ENCODE measurements at regions of chr5 and their contacts with region 1.

Region 1: GRCh38 chr5:34474573-34475021 is 181.5 kb upstream of the RAI14 start:
- DNase-seq: peak in 4 of 7 donors; percentile 14 to 38 (median 26)
- H3K4me3 ChIP-seq: no peak overlapping the region
- H3K27ac ChIP-seq: no peak overlapping the region
- H3K4me1 ChIP-seq: no peaks in the 10 kb centered on the region
- H3K27me3 ChIP-seq: no peaks in the 10 kb centered on the region
- CTCF ChIP-seq: peak; percentile 83 to 95 (median 87)
- POLR2A ChIP-seq: no peak

Region 2: DNA sequence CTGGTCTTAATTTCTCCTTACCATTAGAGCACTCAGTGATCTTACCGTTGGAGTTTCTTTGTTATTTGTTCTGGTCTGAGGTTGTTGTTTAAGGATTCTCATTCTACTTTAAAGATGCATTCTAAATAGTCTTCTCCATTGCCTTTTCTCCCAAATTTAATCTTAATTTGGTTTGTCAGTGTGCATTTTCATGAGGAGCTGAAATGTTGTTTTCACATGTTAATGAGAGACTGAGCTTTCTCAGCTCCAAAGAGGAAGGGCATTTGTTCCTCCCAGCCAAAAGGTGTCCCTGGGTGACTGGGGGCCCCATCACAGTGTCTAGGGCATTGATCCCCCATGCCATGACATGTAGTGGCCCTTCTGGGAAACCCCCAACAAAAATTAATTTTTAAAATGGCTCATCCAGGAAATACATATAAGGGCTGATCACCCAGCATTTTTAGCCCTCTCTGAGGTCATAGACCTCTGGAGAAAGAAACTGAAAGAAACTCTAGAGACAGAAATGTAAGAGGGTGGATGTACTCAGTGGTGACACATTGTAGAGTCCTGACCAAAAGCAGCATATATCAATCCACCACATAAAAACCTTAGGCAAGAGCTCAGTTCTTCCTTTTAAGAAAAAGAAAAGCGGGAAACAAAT is 58.9 kb before region 1 on chr5:
- intact Hi-C with region 1: no loop called
- DNase-seq: no peak
- H3K4me3 ChIP-seq: no peak overlapping the region
- H3K27ac ChIP-seq: no peak overlapping the region
- H3K4me1 ChIP-seq: no peaks in the 10 kb centered on the region
- H3K27me3 ChIP-seq: no peaks in the 10 kb centered on the region
- CTCF ChIP-seq: no peak
- POLR2A ChIP-seq: no peak

Region 3: DNA sequence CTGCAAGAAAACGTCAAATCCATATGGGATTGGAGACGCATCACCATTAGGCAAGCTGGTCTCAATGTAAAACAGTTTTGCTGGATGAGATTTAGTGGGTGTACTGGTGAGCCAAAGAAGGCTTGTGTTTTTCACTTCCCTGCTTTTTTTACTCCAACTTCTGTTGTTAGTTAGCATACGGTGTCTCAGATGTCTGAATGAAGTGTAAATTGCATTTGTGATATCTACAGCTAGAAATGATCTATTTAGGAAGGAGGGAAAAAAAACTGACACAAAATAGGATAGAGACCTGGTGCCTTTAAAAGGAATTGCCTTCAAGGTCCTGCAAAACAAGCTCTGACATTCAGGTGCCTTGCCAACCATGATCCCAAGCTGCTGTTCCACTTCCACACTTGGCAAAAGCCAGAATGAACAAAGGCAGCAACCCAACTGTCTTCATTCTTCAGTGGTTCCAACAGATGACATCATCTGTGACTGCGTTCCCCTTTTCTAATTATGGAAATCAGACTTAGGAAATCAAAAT is 77.4 kb after region 1 on chr5:
- intact Hi-C with region 1: no loop called
- DNase-seq: peak in 6 of 7 donors; percentile 23 to 60 (median 34)
- H3K4me3 ChIP-seq: no peak overlapping the region
- H3K27ac ChIP-seq: no peak overlapping the region
- H3K4me1 ChIP-seq: peaks cover 0 to 7% of the 10 kb centered on the region in 2 donors
- H3K27me3 ChIP-seq: no peaks in the 10 kb centered on the region
- CTCF ChIP-seq: no peak
- POLR2A ChIP-seq: no peak

Region 4: GRCh38 chr5:35003018-35003957 is 528.7 kb after region 1 on chr5:
- intact Hi-C with region 1: loop called in 1 of 2 experiments (anchors 5 kb)
- DNase-seq: peak; percentile 31 to 76 (median 60)
- H3K4me3 ChIP-seq: no peak overlapping the region
- H3K27ac ChIP-seq: no peak overlapping the region
- H3K4me1 ChIP-seq: no peaks in the 10 kb centered on the region
- H3K27me3 ChIP-seq: no peaks in the 10 kb centered on the region
- CTCF ChIP-seq: peak; percentile 56 to 93 (median 76)
- POLR2A ChIP-seq: no peak

Measured in adrenal gland (tissue), 19 donors.